Posterior cingulate gyrus (tissue), 11 donors: ENCODE measurements at regions of chr3 and their contacts with region 1.

Region 1: GRCh38 chr3:105448338-105448982 is 81.8 kb downstream of the ALCAM start:
- DNase-seq: peak; percentile 52 to 96 (median 80)

Region 2: GRCh38 chr3:105518806-105519418 is 70.5 kb after region 1 on chr3:
- intact Hi-C with region 1: loop called (anchors 5 kb)
- DNase-seq: peak in 1 of 10 donors; percentile 20